Heart right ventricle (tissue), 16 donors: ENCODE measurements at regions of chrX and their contacts with region 1.

Region 1: GRCh38 chrX:10119399-10119990 is 37.3 kb upstream of the CLCN4 start:
- DNase-seq: peak in 1 of 2 donors; percentile 60
- ATAC-seq: peak; percentile 62 to 79 (median 68)
- H3K4me3 ChIP-seq: no peak overlapping the region
- H3K27ac ChIP-seq: peak overlapping the region in 3 of 10 donors; percentile 31 to 60 (median 48)
- H3K4me1 ChIP-seq: peaks cover 0 to 35% (median 7%) of the 10 kb centered on the region in 9 donors
- H3K27me3 ChIP-seq: no peaks in the 10 kb centered on the region
- CTCF ChIP-seq: peak; percentile 93 to 100 (median 99)

Region 2: DNA sequence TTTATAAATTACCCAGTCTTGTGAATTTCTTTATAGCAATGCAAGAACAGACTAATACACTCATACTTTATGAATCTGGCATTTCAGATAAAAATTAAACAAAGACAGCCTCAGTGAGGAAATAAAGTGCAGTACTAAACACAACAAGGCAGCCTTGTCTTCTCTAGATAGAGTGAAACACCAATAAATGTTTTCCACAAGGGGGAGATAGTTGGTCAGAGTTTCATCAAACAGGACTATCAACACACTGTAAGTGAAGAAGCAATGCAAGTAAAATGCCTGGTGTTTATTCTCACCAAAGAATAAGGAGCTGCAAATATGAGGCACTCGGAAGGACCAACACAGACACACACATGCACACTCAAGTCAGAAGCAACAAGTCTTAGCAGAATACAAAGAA is 1148.4 kb before region 1 on chrX:
- intact Hi-C with region 1: loop called in 1 of 10 experiments (anchors 10 kb)
- DNase-seq: no peak
- ATAC-seq: peak in 2 of 8 donors; percentile 47 to 50
- H3K4me3 ChIP-seq: no peak overlapping the region
- H3K27ac ChIP-seq: no peak overlapping the region
- H3K4me1 ChIP-seq: no peaks in the 10 kb centered on the region
- H3K27me3 ChIP-seq: peaks cover 0 to 32% (median 0%) of the 10 kb centered on the region in 7 donors
- CTCF ChIP-seq: peak in 8 of 9 donors; percentile 14 to 53 (median 36)

Region 3: DNA sequence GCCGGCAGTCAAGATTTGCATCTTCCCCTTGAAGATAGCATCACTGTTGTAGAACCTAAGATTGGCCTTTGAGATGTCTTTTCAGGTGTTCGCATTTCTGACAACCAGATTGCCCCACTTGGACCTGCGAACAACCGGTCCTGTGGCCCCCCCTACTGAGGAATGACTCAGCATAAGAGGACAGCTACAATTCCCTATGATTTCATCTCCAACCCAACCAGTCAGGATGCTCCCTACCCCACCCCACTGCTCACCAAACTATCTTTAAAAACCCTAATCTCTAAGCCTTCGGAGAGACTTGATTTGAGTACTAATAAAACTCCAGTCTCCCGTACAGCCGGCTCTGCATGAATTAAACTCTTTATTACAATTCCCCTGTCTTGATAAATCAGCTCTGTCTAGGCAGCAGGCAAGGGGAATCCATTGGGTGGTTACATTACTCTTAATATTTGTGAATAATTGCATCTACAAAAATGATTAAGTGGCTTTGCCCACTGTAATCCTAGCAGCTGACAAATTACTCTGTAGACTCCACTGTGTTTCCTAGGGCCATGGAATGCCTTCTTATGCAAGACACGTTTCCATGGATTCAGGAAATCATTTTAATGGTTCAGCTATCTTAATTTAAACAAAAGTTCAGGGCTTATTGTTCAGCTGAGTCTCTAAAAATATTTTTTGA is 449.2 kb before region 1 on chrX:
- intact Hi-C with region 1: no loop called
- DNase-seq: no peak
- ATAC-seq: no peak
- H3K4me3 ChIP-seq: no peak overlapping the region
- H3K27ac ChIP-seq: no peak overlapping the region
- H3K4me1 ChIP-seq: no peaks in the 10 kb centered on the region
- H3K27me3 ChIP-seq: peaks cover 0 to 4% (median 0%) of the 10 kb centered on the region in 7 donors
- CTCF ChIP-seq: no peak

Region 4: GRCh38 chrX:9885150-9885549 is 234.3 kb before region 1 on chrX:
- intact Hi-C with region 1: loop called in 2 of 10 experiments (anchors 5 to 10 kb)
- DNase-seq: peak; percentile 40 to 46
- ATAC-seq: peak; percentile 43 to 76 (median 64)
- H3K4me3 ChIP-seq: no peak overlapping the region
- H3K27ac ChIP-seq: no peak overlapping the region
- H3K4me1 ChIP-seq: peaks cover 0 to 21% (median 0%) of the 10 kb centered on the region in 9 donors
- H3K27me3 ChIP-seq: peaks cover 0 to 42% (median 0%) of the 10 kb centered on the region in 7 donors
- CTCF ChIP-seq: peak in 8 of 9 donors; percentile 13 to 68 (median 55)

Region 5: DNA sequence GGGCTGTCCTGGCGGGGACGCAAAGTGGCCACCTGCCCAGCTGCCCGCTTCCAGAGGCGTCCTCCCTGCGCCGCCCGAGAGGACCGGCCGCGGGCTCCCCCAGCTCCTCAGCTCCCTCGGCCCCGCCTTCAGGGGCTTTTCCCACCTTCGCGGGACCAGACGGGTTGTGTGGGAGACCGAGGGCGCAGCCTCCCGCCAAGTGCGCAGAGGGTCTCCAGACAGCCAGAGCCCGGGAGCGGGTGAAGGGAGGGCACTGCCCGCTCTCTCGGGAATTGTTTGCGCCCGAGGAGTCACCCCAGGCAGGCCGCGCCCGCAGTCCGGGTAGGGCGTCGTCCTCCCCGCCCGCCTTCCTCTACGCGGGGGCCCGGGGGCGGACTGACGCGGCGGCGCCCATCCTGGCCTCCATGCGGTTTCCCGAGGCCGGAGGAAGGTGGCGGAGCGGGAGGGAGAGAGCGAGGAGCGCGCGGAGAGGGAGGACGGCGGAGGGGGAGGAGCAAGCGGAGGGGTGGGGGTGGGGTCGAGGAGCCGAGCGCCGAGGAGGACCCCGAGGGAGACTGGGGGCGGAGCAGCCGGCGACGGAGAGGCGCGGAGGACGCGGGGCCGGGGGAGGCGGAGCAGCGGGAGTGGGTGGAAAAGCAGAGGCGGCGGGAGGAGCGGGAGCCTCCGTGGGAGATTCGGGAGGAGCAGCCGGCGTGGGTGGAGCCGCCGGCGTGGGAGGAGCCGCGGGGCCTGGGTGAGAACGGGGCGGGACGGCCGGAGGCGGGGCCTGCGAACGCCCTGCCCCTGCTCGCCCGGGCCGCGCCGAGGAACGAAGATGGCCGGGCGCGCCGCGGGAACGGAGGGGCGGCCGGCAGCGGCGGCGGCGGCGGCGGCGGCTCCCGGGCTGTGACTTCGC is 104.8 kb before region 1 on chrX:
- intact Hi-C with region 1: loop called in 4 of 10 experiments (anchors 5 kb)
- DNase-seq: peak; percentile 87 to 93
- ATAC-seq: peak; percentile 88 to 96 (median 92)
- H3K4me3 ChIP-seq: peak overlapping the region; percentile 47 to 65 (median 60)
- H3K27ac ChIP-seq: peak overlapping the region; percentile 84 to 95 (median 92)
- H3K4me1 ChIP-seq: peaks cover 2 to 57% (median 33%) of the 10 kb centered on the region in 9 donors
- H3K27me3 ChIP-seq: peaks cover 0 to 63% (median 0%) of the 10 kb centered on the region in 7 donors
- CTCF ChIP-seq: no peak